ENCODE measurements at regions of chr6 and their contacts with region 1.

Region 1: GRCh38 chr6:17156112-17156921 is 54.5 kb downstream of the STMND1 start:
- DNase-seq: peak; percentile 76
- H3K4me3 Mint-ChIP-seq: no peak overlapping the region
- H3K27ac Mint-ChIP-seq: no peak overlapping the region
- H3K4me1 Mint-ChIP-seq: no peaks in the 10 kb centered on the region
- H3K27me3 Mint-ChIP-seq: peaks cover 9% of the 10 kb centered on the region

Region 2: GRCh38 chr6:17493286-17493685 is 337.0 kb after region 1 on chr6:
- CTCF ChIA-PET with region 1: no interaction called
- intact Hi-C with region 1: no loop called
- DNase-seq: no peak
- H3K4me3 Mint-ChIP-seq: no peak overlapping the region
- H3K27ac Mint-ChIP-seq: no peak overlapping the region
- H3K4me1 Mint-ChIP-seq: no peaks in the 10 kb centered on the region
- H3K27me3 Mint-ChIP-seq: peaks cover 27% of the 10 kb centered on the region

Region 3: DNA sequence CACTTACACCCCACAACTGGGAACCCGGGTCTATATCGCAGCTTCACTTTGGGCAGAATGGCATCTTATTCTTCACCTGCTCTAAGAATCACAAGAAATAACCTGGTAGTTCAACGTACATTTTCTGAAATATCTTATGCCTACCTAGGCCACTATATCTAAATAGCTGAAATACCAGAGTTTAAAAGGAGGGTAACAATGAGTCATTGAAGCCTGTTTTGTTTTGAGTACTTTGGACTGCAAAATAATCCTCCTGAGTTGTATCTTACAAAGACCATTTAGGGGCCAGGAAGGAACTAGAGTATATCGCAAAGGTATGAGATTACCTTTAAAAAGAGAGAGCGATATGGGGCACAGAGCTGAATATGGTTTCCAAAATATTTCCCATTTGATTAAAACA is 647.1 kb after region 1 on chr6:
- CTCF ChIA-PET with region 1: no interaction called
- intact Hi-C with region 1: loop called (anchors 5 kb)
- DNase-seq: no peak
- H3K4me3 Mint-ChIP-seq: no peak overlapping the region
- H3K27ac Mint-ChIP-seq: no peak overlapping the region
- H3K4me1 Mint-ChIP-seq: no peaks in the 10 kb centered on the region
- H3K27me3 Mint-ChIP-seq: peaks cover 8% of the 10 kb centered on the region

Region 4: DNA sequence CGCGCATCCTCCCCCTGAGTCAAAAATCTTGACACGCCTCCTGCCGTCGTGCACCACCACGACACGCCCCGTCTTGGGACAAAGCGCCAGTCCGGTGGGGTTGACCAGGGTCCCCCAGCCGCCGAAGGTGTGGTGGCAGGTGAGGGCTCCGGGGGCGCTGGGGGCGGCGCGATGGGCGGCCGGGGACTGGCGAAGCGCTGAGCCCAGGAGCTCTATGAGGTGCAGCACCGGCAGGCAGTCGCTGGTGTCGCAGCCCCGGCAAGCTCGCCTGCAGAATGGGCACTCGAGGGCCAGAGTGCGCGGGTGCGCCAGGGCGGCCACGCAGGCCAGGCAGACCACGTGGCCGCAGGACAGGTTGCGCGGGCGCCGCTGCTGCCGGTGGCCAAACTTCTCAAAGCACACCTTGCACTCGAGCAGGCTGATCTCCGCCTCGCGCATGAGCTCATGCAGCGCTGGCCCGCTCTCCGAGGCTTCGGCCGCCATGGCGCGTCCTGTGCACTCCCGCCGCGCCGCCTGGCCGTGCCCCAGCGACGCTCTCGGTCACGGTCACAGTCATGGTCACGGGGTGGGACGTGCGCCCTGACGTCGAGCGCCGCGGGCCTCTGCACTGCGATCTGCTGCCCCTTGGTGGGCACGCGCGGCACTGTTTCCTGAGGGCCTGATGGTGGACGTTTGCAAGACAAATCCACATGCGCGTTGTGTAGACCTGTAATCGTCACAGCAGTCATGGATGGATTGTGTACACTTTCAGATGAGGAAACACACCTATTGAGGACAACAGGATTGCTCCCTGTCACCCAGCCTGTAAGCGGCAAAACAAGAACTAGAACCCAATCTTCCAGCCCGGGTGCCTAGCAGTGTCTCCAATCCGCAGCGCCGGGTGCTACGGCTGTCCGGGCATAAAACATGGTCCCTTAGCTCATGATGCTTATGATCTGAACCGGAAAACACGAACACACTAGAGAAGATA is 966.1 kb after region 1 on chr6 and contains the start of gene NHLRC1:
- CTCF ChIA-PET with region 1: no interaction called
- intact Hi-C with region 1: loop called (anchors 2 kb)
- DNase-seq: peak; percentile 85
- H3K4me3 Mint-ChIP-seq: peak within 1 kb of the TSS; percentile 67
- H3K27ac Mint-ChIP-seq: no peak within 1 kb of the TSS
- H3K4me1 Mint-ChIP-seq: peaks cover 9% of the 10 kb centered on the region
- H3K27me3 Mint-ChIP-seq: peaks cover 25% of the 10 kb centered on the region
- total RNA-seq, gene NHLRC1: 0.10 to 0.25 TPM

Measured in activated naive CD4-positive, alpha-beta T cell treated with anti-CD3 and anti-CD28 coated beads for 36 hours (primary cell).